Posterior cingulate gyrus (tissue), 11 donors: ENCODE measurements at regions of chr2 and their contacts with region 1.

Region 1: DNA sequence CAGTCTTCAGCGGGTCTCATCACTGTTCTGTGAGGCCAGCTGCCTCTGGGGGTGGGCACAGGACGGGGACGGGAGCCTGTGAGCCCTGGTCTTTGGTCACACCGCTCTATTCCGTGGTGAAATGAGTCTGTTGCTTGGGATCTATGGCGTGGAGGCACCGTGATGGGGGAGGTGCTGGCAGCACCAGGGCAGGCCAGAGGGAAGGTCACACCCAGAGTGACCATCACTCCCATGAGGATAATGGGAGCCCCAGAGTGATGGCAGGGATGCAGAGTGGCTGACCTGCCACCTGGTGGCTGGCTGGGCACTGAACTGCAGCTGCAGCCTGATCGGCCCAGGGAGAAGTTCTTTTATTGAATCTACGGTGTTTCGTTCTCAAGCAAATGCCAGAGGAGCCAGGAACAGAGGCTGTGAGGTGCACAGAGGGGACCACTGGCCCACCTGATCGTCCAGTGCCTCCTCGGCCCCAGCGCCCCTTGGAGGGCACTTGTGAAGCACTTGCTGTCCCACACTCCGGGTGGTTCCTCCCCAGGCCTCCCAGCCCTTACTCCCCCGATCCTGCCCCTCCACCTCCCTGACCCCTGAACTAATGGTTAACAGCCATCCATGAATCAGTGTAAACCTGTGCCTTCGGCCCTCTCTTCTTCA is 17.9 kb downstream of the KCNIP3 start:
- DNase-seq: peak in 9 of 10 donors; percentile 53 to 96 (median 75)

Region 2: DNA sequence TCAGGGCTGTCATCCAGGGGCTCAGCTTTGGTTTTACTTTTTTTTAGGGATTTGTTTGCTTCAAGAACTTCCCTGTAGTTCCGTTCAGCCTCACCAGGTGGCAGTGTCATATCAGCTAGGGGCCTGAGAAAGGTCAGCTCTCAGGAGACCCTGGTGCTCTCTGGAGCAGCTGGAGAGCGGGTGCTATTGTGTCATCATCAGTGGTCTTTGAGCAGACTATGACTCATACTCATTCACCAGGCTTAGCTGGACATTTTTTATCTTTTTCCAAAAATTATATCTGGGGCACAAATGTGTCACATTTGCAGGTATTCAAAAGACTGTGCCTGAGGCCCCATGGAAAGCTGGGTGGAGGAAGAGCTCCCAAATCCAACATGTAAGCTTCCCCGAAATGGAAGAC is 83.4 kb before region 1 on chr2:
- intact Hi-C with region 1: loop called (anchors 1 kb)
- DNase-seq: peak in 9 of 10 donors; percentile 32 to 95 (median 78)

Region 3: DNA sequence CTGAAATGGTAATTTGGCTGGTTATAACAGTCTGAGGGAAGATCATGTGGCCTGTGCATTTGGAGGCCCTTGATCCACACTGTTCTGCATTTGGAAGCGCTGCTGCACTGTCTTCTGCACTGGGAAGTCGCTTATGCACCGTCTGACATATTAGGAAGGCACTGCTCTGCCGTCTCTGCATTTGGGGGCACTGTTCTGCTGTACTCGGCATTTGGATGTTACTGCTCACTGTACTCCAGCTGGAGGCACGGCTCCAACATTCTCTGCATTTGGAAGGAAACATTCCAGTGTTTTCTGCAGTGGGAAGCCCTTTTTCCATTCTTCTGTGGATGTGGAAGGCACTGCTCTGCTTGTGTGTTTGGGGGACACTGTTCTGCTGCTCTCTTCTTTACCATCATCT is 50.5 kb before region 1 on chr2:
- intact Hi-C with region 1: loop called (anchors 2 kb)
- DNase-seq: peak in 8 of 10 donors; percentile 44 to 93 (median 66)

Region 4: DNA sequence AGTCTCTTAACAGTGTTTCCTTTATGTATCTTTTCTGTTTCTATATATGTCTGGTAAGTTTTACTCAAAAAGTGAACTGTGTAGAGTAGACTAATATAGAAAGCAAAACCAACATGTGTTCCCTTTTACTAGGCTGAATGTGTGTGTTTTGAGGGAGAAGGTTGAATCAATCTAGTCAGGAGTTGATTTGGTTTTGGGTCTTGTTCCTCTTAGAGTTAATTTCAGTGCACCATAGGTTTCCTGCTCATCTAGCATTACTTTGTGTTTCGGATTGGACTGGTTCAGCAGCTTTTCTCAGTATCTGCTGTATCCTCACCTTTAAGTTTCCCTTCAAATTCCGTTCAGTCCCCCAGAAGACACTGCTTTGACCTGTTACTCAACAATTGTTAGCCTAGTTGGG is 224.7 kb after region 1 on chr2:
- intact Hi-C with region 1: no loop called
- DNase-seq: no peak